Activated CD4-positive, alpha-beta memory T cell treated with anti-CD3 and anti-CD28 coated beads for 36 hours (primary cell): ENCODE measurements at regions of chr9 and their contacts with region 1.

Region 1: DNA sequence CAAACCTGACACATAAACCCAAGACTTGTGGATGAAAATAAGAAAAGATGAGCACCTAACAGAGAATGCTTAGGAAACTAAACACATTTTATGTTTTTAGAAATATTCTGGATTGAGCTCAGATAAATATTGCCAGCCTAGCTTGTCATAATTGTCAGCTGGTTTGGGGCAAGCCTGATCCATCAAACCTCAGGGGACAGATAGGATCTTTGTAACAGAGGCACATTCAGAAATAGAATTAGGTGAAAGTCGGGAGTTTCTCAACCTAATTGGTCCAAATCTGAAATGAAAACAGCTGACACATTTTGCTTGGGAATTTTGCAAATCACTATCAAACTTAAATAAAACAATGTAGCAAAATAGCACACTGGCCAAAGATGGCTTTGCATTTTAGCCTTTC is 503.7 kb downstream of the ANXA1 start:
- DNase-seq: no peak
- H3K4me3 Mint-ChIP-seq: no peak overlapping the region
- H3K27ac Mint-ChIP-seq: no peak overlapping the region
- H3K4me1 Mint-ChIP-seq: no peaks in the 10 kb centered on the region
- H3K27me3 Mint-ChIP-seq: no peaks in the 10 kb centered on the region

Region 2: GRCh38 chr9:73780916-73781315 is 125.6 kb after region 1 on chr9:
- CTCF ChIA-PET with region 1: no interaction called
- POLR2A ChIA-PET with region 1: no interaction called
- intact Hi-C with region 1: no loop called
- DNase-seq: no peak
- H3K4me3 Mint-ChIP-seq: no peak overlapping the region
- H3K27ac Mint-ChIP-seq: no peak overlapping the region
- H3K4me1 Mint-ChIP-seq: no peaks in the 10 kb centered on the region
- H3K27me3 Mint-ChIP-seq: no peaks in the 10 kb centered on the region

Region 3: DNA sequence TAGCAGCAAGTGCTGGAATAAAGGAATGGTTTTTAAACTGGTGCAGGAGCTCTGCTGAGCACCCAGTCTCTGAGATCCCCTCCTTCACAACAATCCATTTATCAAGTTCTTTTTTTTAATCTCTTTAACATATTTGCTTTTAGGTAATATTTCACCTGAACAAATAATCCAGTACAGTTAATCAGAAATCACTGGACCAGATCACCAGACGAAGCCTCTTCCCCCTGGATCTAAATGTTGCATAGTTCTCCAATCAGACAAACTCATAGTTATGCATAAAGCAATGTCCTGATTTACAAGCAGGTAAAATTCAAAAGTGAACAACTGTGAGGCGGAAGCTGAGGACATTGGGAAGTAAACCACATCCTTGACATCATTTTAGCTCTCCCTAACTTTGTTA is 184.1 kb after region 1 on chr9:
- CTCF ChIA-PET with region 1: no interaction called
- POLR2A ChIA-PET with region 1: no interaction called
- intact Hi-C with region 1: loop called (anchors 10 kb)
- DNase-seq: no peak
- H3K4me3 Mint-ChIP-seq: no peak overlapping the region
- H3K27ac Mint-ChIP-seq: no peak overlapping the region
- H3K4me1 Mint-ChIP-seq: no peaks in the 10 kb centered on the region
- H3K27me3 Mint-ChIP-seq: no peaks in the 10 kb centered on the region